Activated naive CD4-positive, alpha-beta T cell treated with anti-CD3 and anti-CD28 coated beads for 36 hours (primary cell): ENCODE measurements at regions of chr7 and their contacts with region 1.

Region 1: DNA sequence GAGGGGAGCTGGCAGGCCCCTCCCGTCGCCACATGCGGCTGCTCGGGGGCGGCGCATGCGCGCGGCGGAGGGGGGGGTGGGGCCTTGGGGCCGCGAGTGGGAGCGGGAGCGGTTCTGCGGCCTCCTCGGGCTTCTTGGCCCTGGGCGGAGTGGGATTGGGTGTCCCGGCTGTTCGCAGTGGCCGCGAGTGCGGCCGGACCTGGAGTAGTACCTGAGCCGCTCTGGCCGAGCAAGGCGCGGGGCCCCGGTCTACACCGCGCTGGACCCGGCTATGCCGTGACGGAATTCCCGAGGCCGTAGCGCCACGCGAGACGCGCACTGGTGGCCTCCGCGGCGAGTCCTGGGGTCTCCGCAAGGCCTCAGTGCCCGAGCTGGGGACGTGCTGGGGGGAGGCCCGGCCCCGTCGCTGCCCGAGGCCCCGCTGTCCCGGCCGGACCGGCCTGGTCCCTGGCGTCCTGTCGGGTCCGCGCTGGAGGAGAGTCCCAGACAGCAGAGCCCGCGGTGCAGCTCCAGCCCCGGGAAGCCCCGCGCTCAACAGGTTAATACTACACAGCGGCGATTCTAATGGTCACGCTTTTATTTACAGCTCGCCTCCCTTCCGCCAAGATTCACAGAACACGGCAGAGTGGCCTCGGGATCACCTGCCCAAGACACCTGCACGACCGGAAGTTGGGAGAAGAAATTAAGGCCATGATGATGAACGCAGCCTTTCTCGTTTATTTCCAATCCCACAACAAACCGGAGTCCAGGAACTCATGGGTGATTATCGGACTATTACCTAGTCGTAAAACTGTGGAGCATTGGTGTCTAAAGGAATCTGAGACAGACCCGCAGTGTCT is 671 bp upstream of the PAXIP1 start:
- DNase-seq: peak; percentile 75
- H3K4me3 Mint-ChIP-seq: peak overlapping the region; percentile 92
- H3K27ac Mint-ChIP-seq: peak overlapping the region; percentile 89
- H3K4me1 Mint-ChIP-seq: peaks cover 7% of the 10 kb centered on the region
- H3K27me3 Mint-ChIP-seq: no peaks in the 10 kb centered on the region

Region 2: DNA sequence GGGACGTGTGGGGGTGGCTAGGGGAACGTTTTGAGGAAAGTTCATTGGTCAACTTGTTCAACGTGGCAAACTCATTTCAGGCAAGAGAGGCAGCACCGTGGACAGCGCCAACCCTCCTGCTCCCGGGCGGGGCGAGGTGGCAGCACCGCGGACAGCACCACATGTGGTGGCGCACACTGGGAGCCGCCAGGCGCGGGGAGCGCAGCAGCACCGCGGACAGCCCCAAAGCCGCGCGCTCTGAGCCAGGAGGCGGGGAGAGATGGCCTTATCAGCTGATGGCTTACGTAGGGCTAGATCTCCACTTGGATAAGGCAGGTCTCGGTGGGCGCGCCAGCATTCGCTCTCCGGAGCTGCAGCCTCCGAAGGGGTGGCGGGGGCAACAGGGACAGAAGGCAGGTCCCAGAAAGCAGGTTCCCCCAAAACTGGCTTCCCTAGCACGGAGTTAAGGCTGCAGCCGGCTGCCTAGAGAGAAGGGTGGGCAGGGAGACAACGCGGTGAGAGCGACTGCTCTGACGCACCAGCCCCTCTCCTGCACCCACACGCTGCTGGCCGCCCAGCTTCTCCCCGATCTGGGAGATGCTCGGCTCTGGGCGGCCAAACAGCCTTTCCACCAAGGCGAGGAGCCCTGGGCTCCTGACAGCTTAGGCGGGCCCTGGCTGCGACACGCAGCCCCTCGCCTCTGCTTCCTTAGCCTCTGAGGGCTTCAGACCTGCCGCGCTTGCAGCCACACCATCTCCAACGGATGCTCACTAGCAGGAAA is 66.6 kb after region 1 on chr7 and contains the start of gene HTR5A:
- CTCF ChIA-PET with region 1: no interaction called
- intact Hi-C with region 1: loop called (anchors 1 kb)
- DNase-seq: peak; percentile 92
- H3K4me3 Mint-ChIP-seq: no peak within 1 kb of the TSS
- H3K27ac Mint-ChIP-seq: no peak within 1 kb of the TSS
- H3K4me1 Mint-ChIP-seq: peaks cover 2% of the 10 kb centered on the region
- H3K27me3 Mint-ChIP-seq: peaks cover 52% of the 10 kb centered on the region
- total RNA-seq, gene HTR5A: not detected